ENCODE measurements at regions of chr12 and their contacts with region 1.

Region 1: DNA sequence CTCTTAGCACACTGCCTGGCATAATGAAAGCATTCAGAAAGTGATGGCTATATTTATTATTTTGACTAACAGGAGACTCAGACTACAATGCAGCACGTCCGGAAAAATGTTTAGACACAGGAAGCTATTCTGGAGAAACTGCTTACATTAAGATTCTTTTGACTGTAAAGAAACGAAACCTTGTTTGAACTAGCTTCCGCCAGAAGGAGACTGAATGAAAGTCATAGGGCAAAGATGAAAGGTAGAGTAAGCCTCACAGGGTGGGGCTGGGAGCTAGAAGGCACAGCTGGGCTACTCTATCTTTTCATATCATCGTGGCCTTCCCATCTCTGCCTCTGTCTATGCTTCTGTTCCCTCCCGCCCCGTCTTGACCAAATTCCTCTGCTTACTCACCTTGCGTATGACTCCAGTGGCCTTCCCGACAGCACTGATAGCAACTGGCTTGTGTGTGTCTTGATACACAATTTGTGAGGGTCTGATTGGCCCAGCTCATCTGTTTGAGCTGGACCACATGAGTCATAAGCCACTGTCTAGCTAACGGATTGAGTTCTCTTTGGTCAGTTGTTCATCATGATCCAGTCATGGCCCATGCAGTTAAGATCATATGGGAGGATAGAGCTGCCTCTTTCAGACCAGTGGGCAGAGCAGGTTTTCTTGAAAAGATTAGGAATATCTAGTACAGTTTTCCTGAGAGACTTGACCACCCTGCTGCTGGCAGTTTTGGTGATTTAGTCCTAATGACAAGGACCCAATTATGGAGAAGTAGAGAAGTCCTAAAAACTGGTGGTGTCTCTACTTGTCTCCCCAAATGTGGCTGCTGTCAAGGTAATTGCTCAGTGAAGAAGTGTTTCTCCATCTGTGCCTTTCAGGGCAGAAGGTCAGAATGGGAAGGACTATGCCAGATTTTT is 151.5 kb upstream of the SLC38A2 start:
- DNase-seq: peak; percentile 74
- H3K4me3 Mint-ChIP-seq: peak overlapping the region; percentile 57
- H3K27ac Mint-ChIP-seq: peak overlapping the region; percentile 95
- H3K4me1 Mint-ChIP-seq: peaks cover 57% of the 10 kb centered on the region
- H3K27me3 Mint-ChIP-seq: no peaks in the 10 kb centered on the region

Region 2: DNA sequence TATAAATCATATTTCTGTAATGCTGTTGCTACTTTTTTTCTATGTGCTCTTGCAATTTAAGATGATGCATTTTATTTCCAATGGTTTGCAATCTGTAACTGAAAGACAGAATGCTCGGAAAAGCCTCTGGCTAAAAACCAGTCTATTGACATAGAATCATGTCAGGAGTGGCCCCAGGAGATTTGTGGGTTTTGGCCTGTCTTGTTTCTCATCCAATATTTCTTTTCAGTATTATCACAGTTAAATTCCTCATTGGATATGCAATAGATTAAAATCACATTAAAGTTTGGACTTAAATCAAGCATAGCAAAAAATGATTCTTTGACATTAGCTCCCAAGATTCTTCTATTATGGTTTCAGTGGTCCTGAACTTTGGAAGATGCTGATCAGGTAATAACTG is 132.5 kb before region 1 on chr12:
- CTCF ChIA-PET with region 1: no interaction called
- DNase-seq: no peak
- H3K4me3 Mint-ChIP-seq: no peak overlapping the region
- H3K27ac Mint-ChIP-seq: no peak overlapping the region
- H3K4me1 Mint-ChIP-seq: peaks cover 52% of the 10 kb centered on the region
- H3K27me3 Mint-ChIP-seq: no peaks in the 10 kb centered on the region

Region 3: DNA sequence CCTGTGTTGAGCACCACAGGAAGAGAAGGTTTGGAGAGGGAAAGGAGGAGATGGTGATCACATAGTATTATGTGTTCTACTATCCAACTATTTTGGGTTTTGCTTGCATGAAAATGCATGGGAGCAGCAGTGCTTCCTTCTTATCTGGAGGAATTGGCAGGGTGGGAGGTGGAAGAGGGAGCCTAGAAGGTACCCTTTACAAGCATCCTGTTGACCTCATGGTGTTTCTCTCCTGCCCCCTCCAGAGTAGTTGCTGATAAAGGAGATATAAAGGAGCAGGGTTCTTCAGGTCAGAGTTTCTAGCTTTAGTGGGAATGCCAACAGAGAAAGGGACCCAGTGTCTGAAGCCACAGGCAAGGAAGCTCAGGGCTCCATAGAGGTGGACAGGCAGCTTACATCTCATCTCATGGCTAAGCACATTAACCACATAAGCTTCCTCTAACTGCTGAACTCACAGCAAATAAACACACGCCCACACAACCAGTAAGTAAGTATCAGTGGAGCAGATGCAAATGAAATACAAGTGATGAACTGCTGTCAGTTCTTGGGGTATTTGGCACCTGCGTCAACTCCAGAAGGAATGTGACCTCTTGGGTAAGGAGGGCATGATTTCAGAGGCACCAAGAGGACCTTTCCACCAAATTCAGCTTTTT is 22.6 kb after region 1 on chr12:
- CTCF ChIA-PET with region 1: interaction called, 12 read pairs
- DNase-seq: peak; percentile 26
- H3K4me3 Mint-ChIP-seq: no peak overlapping the region
- H3K27ac Mint-ChIP-seq: peak overlapping the region; percentile 78
- H3K4me1 Mint-ChIP-seq: peaks cover 62% of the 10 kb centered on the region
- H3K27me3 Mint-ChIP-seq: no peaks in the 10 kb centered on the region

Region 4: DNA sequence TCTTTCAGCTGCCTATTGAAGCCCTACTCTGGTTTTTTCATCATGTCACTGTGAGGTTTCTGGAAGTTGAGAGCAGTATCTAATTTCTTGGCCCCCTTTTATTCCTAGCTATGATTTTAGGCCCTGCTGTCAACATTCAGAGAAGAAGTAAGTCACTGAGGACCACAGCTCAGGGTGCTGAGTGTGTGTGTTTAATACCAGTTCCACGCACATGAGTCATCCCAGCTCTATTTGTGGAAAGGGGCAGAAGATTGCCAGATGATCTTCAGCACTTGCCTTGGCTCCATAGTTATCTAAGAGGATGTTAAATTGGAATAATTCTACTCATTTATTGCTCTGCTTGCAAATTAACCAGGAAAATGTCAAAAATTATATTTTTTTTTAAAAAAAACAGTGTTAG is 367.2 kb after region 1 on chr12:
- CTCF ChIA-PET with region 1: no interaction called
- DNase-seq: no peak
- H3K4me3 Mint-ChIP-seq: no peak overlapping the region
- H3K27ac Mint-ChIP-seq: no peak overlapping the region
- H3K4me1 Mint-ChIP-seq: no peaks in the 10 kb centered on the region
- H3K27me3 Mint-ChIP-seq: peaks cover 4% of the 10 kb centered on the region